Gastrocnemius medialis (tissue), 4 donors: ENCODE measurements at regions of chr11 and their contacts with region 1.

Region 1: GRCh38 chr11:22666688-22667439 is 453 bp downstream of the GAS2 start:
- DNase-seq: peak; percentile 7 to 44
- ATAC-seq: peak; percentile 49 to 60
- H3K4me3 ChIP-seq: peak overlapping the region; percentile 63 to 75 (median 70)
- H3K27ac ChIP-seq: peak overlapping the region; percentile 70 to 84 (median 82)
- H3K4me1 ChIP-seq: peaks cover 22 to 27% of the 10 kb centered on the region in 2 donors
- H3K27me3 ChIP-seq: no peaks in the 10 kb centered on the region
- CTCF ChIP-seq: peak in 2 of 5 experiments; percentile 19 to 32
- POLR2A ChIP-seq: no peak

Region 2: DNA sequence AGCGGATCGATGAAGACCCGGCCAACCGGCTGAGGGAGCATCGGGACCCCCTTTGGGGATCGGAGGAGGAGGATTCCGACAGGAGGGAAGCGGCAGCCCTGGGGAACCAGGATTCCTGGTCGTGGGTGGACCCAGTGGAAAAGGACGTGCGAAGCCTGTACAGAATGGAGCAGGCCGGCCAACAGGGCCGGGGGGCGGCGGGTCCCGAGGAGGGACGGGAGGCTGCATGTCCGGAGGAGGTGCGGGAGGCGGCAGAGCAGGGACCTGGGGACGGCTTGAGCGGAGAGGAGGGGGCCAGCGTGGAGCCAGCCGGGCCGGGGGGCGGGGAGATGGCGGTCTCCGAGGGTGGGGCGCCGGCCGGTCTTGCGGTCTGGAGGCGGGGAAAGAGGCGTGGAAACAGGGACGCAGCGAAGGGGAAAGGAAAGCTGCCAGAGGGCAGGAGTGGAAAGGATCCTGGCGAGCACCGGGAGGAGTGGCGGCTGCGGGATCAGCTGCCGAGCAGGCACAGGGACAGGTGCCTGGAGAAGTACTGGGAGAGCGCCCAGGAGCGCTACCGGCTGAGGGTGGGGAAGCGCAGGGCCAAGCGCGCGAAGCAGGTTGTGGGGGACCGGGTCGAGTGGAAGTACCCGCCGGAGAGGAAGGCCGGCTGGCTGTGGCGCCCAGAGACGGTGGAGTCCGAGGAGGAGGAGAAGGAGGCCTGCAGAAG is 474.1 kb before region 1 on chr11 and contains the start of gene ANO5:
- in situ Hi-C with region 1: loop called in 1 of 4 experiments (anchors 25 kb)
- intact Hi-C with region 1: no loop called
- DNase-seq: peak; percentile 92 to 95
- ATAC-seq: peak; percentile 81 to 84
- H3K4me3 ChIP-seq: peak within 1 kb of the TSS; percentile 85 to 96 (median 92)
- H3K27ac ChIP-seq: peak within 1 kb of the TSS; percentile 92 to 99 (median 98)
- H3K4me1 ChIP-seq: peaks cover 21 to 26% of the 10 kb centered on the region in 2 donors
- H3K27me3 ChIP-seq: no peaks in the 10 kb centered on the region
- CTCF ChIP-seq: no peak
- POLR2A ChIP-seq: peak; percentile 90 to 95
- total RNA-seq, gene ANO5: 18.8 to 71.2 (median 35.4) TPM

Region 3: GRCh38 chr11:22456992-22457748 is 209.7 kb before region 1 on chr11:
- in situ Hi-C with region 1: no loop called
- intact Hi-C with region 1: no loop called
- DNase-seq: no peak
- ATAC-seq: no peak
- H3K4me3 ChIP-seq: no peak overlapping the region
- H3K27ac ChIP-seq: no peak overlapping the region
- H3K4me1 ChIP-seq: peaks cover 0 to 4% of the 10 kb centered on the region in 2 donors
- H3K27me3 ChIP-seq: no peaks in the 10 kb centered on the region
- CTCF ChIP-seq: no peak
- POLR2A ChIP-seq: no peak

Region 4: DNA sequence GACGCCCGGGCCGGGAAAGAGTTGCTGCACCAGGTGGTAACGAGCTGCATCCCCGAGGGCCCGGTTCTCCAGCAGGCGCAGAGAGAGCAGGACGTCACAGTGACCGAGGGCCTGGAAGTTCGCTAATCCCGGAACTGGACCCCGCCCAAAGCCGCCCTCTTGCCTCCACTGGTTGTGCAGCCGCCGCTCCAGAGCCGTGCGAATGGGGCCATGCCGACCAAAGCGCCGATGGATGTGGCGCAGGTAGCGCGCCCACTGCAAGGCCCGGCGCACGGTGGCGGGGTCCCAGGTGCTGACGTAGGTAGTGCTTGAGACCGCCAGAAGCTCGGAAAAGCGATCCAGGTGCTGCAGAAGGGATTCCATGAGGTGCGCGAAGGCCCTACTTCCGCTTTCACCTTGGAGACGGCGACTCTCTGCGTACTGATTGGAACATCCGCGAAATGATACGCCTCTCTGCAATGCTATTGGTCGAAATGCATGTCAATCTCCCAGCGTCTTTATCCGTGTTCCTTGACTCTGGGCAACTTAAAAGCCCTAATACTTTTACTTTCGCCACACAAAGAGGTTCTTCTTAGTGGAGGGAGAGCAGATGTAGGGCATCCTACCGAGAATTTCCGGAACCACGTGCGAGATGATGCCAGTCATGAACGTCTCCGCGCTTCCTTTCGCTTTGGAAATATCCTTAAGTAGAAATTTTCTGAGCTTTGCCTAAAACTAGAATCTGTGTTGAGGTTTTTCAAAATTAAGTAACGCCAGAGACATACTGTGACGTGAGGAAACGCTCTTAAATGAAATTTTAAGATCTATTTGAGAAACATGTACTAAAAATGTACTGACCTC is 41.2 kb before region 1 on chr11 and contains the start of gene FANCF:
- in situ Hi-C with region 1: no loop called
- intact Hi-C with region 1: loop called (anchors 5 kb)
- DNase-seq: peak; percentile 93
- ATAC-seq: peak; percentile 99 to 100
- H3K4me3 ChIP-seq: peak within 1 kb of the TSS; percentile 75 to 98 (median 88)
- H3K27ac ChIP-seq: peak within 1 kb of the TSS; percentile 80 to 87 (median 86)
- H3K4me1 ChIP-seq: peaks cover 12 to 13% of the 10 kb centered on the region in 2 donors
- H3K27me3 ChIP-seq: no peaks in the 10 kb centered on the region
- CTCF ChIP-seq: no peak
- POLR2A ChIP-seq: no peak
- total RNA-seq, gene FANCF: 0.73 to 2.9 (median 2.1) TPM

Region 5: DNA sequence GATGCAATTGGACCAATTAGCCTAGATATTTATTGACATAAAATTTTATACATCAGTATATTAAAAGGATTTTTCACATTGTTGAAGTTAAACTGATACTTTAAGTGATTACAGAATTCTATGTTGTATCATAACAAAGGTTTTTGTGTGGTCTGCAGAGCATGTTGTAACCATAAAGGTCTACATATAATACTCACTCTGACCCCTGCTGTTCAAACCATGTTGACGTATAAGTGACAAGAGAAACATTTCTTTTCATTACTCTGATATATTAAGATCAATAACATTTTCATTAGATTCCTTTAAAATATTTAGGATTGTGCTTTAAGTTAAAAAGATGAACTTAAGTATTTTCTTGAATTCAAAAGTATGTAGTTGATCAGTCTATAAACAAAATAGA is 63.5 kb after region 1 on chr11:
- in situ Hi-C with region 1: loop called in 1 of 4 experiments (anchors 10 kb)
- intact Hi-C with region 1: loop called (anchors 2 kb)
- DNase-seq: no peak
- ATAC-seq: peak in 1 of 2 donors; percentile 48
- H3K4me3 ChIP-seq: no peak overlapping the region
- H3K27ac ChIP-seq: no peak overlapping the region
- H3K4me1 ChIP-seq: peaks cover 17 to 28% of the 10 kb centered on the region in 2 donors
- H3K27me3 ChIP-seq: no peaks in the 10 kb centered on the region
- CTCF ChIP-seq: peak in 2 of 5 experiments; percentile 41 to 45
- POLR2A ChIP-seq: no peak

Region 6: DNA sequence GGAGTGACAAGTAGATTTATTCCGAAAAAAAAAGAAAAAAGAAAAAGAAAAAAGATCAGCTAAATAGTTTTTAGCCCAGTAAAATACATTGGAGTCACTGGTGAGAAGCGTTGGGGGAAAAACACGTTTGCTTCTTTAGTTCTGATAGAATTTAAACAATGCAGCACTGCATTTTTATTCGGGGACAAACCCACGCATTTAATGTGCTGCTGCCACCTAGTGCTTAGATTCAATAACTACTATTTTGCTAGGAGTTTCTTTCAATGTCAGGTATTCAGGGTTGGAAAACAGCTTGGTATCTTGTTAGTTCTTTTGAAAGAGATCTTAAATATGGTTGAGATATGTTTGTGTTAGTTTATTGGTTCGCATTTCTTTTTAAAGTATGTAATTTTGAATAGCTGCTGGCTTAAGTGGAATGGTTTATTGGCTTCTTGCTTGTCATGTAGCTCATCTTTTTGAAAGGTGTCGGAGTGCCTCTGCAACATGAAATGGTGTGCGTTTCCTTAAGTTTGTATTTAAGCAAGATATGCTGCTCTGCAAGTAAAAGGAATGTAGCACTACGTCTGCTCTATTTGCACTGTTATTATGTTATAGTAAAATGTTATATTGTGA is 120.8 kb after region 1 on chr11:
- in situ Hi-C with region 1: no loop called
- intact Hi-C with region 1: loop called (anchors 5 kb)
- DNase-seq: no peak
- ATAC-seq: peak; percentile 52 to 73
- H3K4me3 ChIP-seq: peak overlapping the region in 1 of 4 donors; percentile 3
- H3K27ac ChIP-seq: no peak overlapping the region
- H3K4me1 ChIP-seq: no peaks in the 10 kb centered on the region
- H3K27me3 ChIP-seq: no peaks in the 10 kb centered on the region
- CTCF ChIP-seq: peak; percentile 40 to 82 (median 63)
- POLR2A ChIP-seq: no peak

Region 7: GRCh38 chr11:22829231-22830081 is 162.6 kb after region 1 on chr11 and contains the start of gene SVIP:
- in situ Hi-C with region 1: no loop called
- intact Hi-C with region 1: loop called (anchors 10 kb)
- DNase-seq: peak; percentile 88 to 91
- ATAC-seq: peak; percentile 92 to 95
- H3K4me3 ChIP-seq: peak within 1 kb of the TSS; percentile 78 to 92 (median 86)
- H3K27ac ChIP-seq: peak within 1 kb of the TSS; percentile 86 to 92 (median 88)
- H3K4me1 ChIP-seq: peaks cover 4 to 6% of the 10 kb centered on the region in 2 donors
- H3K27me3 ChIP-seq: no peaks in the 10 kb centered on the region
- CTCF ChIP-seq: peak in 4 of 5 experiments; percentile 14 to 74 (median 57)
- POLR2A ChIP-seq: peak; percentile 80 to 81
- total RNA-seq, gene SVIP: 10.2 to 22.0 (median 14.6) TPM